ENCODE measurements at regions of chr19 and their contacts with region 1.

Region 1: GRCh38 chr19:40403262-40403984 is 9.8 kb downstream of the PRX start:
- DNase-seq: peak; percentile 92
- H3K4me3 Mint-ChIP-seq: peak overlapping the region; percentile 79
- H3K27ac Mint-ChIP-seq: no peak overlapping the region
- H3K4me1 Mint-ChIP-seq: peaks cover 20% of the 10 kb centered on the region
- H3K27me3 Mint-ChIP-seq: no peaks in the 10 kb centered on the region
- CTCF ChIP-seq: peak; percentile 6

Region 2: DNA sequence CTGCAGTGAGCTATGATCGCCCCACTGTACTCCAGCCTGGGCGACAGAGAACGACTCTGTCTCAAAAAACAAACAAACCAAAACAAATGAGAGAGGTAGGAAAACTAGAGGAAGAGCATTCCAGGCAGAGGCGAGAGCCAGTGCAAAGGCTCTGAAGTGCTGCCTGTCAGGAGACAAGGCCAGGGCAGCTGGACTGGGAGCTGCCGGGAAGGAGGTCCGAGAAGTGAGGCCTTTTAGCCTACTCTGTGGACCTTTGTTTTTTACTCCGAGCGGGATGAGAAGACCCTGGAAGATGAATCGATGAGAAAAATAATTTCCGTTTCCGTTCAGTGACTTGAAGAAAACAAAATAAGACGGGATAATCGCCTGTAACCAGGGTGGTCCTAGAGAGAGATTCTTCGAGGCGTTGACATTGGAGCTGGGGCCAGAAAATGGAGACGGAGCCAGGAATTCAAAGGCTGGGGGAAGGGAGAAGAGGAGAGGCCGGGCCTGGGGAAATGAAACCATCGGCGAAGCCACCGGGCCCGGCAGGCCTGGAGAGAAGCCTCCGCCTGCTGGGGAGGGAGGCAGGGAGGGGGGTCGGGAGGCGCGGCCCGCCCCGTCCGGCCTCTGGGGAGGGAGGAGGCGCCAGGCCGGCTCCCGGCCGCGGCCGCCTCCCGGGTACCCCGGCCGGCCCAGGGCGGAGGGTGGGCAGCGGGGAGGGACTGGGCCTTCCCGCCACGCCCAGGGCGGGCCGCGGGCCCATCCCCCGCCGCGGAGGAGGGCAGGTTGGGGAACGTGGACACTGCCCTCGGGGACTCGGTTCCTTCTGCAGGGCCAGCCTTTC is 30.2 kb after region 1 on chr19:
- CTCF ChIA-PET with region 1: interaction called, 3 read pairs
- POLR2A ChIA-PET with region 1: interaction called, 10 read pairs
- intact Hi-C with region 1: no loop called
- DNase-seq: peak; percentile 93
- H3K4me3 Mint-ChIP-seq: peak overlapping the region; percentile 78
- H3K27ac Mint-ChIP-seq: peak overlapping the region; percentile 97
- H3K4me1 Mint-ChIP-seq: peaks cover 11% of the 10 kb centered on the region
- H3K27me3 Mint-ChIP-seq: no peaks in the 10 kb centered on the region
- CTCF ChIP-seq: no peak